CD8-positive, alpha-beta T cell (primary cell): ENCODE measurements at regions of chr1 and their contacts with region 1.

Region 1: DNA sequence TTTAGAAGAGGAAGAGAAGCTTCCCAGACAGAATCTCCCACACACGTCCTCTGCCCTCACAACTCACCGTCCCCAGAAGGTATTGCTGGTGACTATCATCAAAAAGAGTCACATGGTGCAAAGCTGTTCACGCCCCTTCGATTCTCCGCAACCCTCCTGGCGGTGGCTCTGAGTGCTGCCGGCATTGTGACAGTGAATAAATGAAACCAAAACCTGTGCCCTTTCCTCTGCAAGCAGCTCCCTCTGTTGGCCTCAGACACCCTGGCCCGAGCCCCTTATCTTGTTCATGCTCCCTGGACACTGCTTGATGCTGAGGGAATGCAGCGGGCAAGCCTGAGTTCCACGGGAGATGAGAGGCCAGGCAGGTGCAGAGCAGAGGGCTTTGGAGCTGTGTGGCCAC is 510.3 kb downstream of the NPHP4 start:
- DNase-seq: peak in 8 of 9 experiments; percentile 19 to 71 (median 47)
- ATAC-seq: peak; percentile 80
- H3K4me3 ChIP-seq: no peak overlapping the region
- H3K4me3 Mint-ChIP-seq: no peak overlapping the region
- H3K27ac ChIP-seq: no peak overlapping the region
- H3K27ac Mint-ChIP-seq: no peak overlapping the region
- H3K4me1 ChIP-seq: peaks cover 6% of the 10 kb centered on the region
- H3K4me1 Mint-ChIP-seq: peaks cover 7% of the 10 kb centered on the region
- H3K27me3 ChIP-seq: no peaks in the 10 kb centered on the region
- H3K27me3 Mint-ChIP-seq: peaks cover 10% of the 10 kb centered on the region
- CTCF ChIP-seq: peak; percentile 48

Region 2: GRCh38 chr1:5286244-5286643 is 195.6 kb before region 1 on chr1:
- CTCF ChIA-PET with region 1: interaction called, 7 read pairs
- POLR2A ChIA-PET with region 1: no interaction called
- intact Hi-C with region 1: loop called in 1 of 2 experiments (anchors 10 kb)
- DNase-seq: peak in 7 of 9 experiments; percentile 40 to 84 (median 49)
- ATAC-seq: no peak
- H3K4me3 ChIP-seq: no peak overlapping the region
- H3K4me3 Mint-ChIP-seq: no peak overlapping the region
- H3K27ac ChIP-seq: no peak overlapping the region
- H3K27ac Mint-ChIP-seq: no peak overlapping the region
- H3K4me1 ChIP-seq: no peaks in the 10 kb centered on the region
- H3K4me1 Mint-ChIP-seq: peaks cover 5% of the 10 kb centered on the region
- H3K27me3 ChIP-seq: no peaks in the 10 kb centered on the region
- H3K27me3 Mint-ChIP-seq: no peaks in the 10 kb centered on the region
- CTCF ChIP-seq: no peak

Region 3: DNA sequence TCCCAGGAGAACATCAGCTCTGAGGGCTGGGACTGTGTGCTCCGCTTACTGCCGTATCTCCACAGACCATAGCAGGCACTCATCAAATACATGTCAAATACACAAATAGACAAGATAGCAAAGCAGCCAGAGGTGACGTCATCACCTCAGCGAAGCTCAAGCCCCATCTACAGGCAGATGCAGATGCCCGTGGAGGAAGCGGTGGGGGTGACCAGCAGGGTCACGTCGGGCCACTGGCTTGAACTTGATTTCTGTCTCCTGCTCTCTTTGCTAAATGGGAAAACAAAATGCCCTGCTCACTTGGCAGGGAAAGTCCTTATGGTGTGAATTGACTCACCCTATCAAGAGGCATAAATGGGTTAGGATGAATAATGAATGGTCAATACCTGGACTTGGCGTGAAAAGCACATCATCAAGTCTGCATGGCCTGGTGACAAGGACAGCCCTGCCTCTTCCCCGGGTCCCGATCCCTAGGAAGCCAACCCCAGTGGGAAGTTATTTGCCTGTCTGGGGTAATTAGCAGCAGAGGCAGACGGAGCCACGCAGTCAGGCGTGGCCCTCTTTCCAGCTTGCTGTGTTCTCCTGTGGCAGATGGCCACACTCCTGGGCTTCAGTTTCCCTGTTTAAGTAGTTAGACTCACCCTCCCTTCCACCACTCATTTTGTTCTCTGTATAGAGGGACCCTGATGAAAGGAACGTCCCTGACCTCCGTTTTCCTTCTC is 25.6 kb before region 1 on chr1:
- CTCF ChIA-PET with region 1: no interaction called
- POLR2A ChIA-PET with region 1: no interaction called
- intact Hi-C with region 1: no loop called
- DNase-seq: peak in 2 of 9 experiments; percentile 9 to 10
- ATAC-seq: no peak
- H3K4me3 ChIP-seq: no peak overlapping the region
- H3K4me3 Mint-ChIP-seq: no peak overlapping the region
- H3K27ac ChIP-seq: no peak overlapping the region
- H3K27ac Mint-ChIP-seq: no peak overlapping the region
- H3K4me1 ChIP-seq: no peaks in the 10 kb centered on the region
- H3K4me1 Mint-ChIP-seq: no peaks in the 10 kb centered on the region
- H3K27me3 ChIP-seq: peaks cover 0 to 2% of the 10 kb centered on the region in 2 experiments
- H3K27me3 Mint-ChIP-seq: peaks cover 6% of the 10 kb centered on the region
- CTCF ChIP-seq: no peak